ENCODE measurements at regions of chr17 and their contacts with region 1.

Region 1: DNA sequence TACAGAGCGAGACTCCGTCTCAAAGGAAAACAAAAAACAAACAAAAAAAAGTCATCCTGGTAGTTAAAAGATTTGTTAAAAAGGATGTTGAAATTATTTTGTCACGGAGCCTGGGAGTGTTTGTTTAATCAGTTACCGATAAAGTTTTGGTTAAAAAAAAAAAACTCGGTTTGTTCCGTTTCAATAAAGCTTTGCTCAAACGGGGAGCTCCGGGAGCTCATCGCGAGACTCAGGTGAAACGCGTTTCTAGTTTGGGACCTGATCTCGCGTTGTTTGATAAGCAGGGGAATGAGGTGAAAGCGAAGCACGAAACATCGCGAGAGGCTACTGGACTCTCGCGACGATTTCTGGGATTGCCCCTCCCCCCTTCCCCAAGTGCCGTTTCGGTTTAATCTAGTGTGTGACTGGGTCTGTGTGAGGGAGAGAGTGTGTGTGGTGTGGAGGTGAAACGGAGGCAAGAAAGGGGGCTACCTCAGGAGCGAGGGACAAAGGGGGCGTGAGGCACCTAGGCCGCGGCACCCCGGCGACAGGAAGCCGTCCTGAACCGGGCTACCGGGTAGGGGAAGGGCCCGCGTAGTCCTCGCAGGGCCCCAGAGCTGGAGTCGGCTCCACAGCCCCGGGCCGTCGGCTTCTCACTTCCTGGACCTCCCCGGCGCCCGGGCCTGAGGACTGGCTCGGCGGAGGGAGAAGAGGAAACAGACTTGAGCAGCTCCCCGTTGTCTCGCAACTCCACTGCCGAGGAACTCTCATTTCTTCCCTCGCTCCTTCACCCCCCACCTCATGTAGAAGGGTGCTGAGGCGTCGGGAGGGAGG is at the start of gene CDK12:
- DNase-seq: peak; percentile 94
- H3K4me3 Mint-ChIP-seq: peak within 1 kb of the TSS; percentile 95
- H3K27ac Mint-ChIP-seq: peak within 1 kb of the TSS; percentile 98
- H3K4me1 Mint-ChIP-seq: peaks cover 44% of the 10 kb centered on the region
- H3K27me3 Mint-ChIP-seq: no peaks in the 10 kb centered on the region
- total RNA-seq, gene CDK12: 97.4 and 99.5 TPM in 2 replicates

Region 2: GRCh38 chr17:39199820-39200069 is 261.6 kb before region 1 on chr17:
- intact Hi-C with region 1: loop called (anchors 5 kb)
- DNase-seq: peak; percentile 84
- H3K4me3 Mint-ChIP-seq: peak overlapping the region; percentile 93
- H3K27ac Mint-ChIP-seq: peak overlapping the region; percentile 98
- H3K4me1 Mint-ChIP-seq: peaks cover 47% of the 10 kb centered on the region
- H3K27me3 Mint-ChIP-seq: no peaks in the 10 kb centered on the region

Region 3: GRCh38 chr17:39401412-39402243 is 59.7 kb before region 1 on chr17 and contains the start of gene FBXL20:
- intact Hi-C with region 1: loop called (anchors 1 kb)
- DNase-seq: peak; percentile 84
- H3K4me3 Mint-ChIP-seq: peak within 1 kb of the TSS; percentile 94
- H3K27ac Mint-ChIP-seq: peak within 1 kb of the TSS; percentile 98
- H3K4me1 Mint-ChIP-seq: peaks cover 40% of the 10 kb centered on the region
- H3K27me3 Mint-ChIP-seq: no peaks in the 10 kb centered on the region
- total RNA-seq, gene FBXL20: 20.1 and 25.6 TPM in 2 replicates

Region 4: DNA sequence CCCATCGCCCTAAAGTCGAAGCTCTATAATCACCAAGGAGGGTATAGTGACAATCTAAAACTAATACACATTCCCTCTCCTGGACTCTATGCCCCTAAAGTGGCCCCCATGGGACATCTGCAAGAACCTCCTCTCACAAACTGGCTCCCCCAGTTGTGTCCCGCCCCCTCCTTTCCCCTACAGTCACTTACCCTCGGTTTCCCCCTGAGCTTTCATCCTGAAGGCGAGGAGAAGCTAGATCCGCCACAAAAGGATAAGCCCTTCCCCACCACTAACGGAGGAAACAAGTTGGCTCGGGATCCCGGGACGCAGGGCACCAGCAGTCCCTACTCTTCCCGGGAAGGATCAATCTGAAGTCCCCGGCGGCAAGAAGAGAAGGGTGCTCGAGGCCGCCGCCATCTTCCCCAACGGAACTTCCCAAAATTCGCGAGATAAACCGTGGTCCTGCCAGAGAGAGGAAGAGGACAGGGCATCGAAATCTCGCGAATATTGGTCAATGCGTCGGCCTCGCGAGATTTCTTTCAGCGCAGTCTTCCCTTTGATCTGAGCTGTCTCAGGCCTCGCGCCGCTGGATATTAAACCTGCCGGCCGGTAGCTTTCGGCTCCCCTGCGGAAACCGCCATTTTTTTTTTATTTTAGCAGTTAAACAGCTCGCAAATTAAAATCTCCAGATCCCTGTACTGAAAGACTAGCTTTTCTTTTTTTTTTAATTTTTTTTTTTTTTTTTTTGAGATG is 10.3 kb before region 1 on chr17 and contains the start of gene MED1:
- intact Hi-C with region 1: loop called (anchors 1 kb)
- DNase-seq: peak; percentile 92
- H3K4me3 Mint-ChIP-seq: peak within 1 kb of the TSS; percentile 99
- H3K27ac Mint-ChIP-seq: peak within 1 kb of the TSS; percentile 93
- H3K4me1 Mint-ChIP-seq: peaks cover 25% of the 10 kb centered on the region
- H3K27me3 Mint-ChIP-seq: no peaks in the 10 kb centered on the region
- total RNA-seq, gene MED1: 72.0 and 73.4 TPM in 2 replicates

Region 5: DNA sequence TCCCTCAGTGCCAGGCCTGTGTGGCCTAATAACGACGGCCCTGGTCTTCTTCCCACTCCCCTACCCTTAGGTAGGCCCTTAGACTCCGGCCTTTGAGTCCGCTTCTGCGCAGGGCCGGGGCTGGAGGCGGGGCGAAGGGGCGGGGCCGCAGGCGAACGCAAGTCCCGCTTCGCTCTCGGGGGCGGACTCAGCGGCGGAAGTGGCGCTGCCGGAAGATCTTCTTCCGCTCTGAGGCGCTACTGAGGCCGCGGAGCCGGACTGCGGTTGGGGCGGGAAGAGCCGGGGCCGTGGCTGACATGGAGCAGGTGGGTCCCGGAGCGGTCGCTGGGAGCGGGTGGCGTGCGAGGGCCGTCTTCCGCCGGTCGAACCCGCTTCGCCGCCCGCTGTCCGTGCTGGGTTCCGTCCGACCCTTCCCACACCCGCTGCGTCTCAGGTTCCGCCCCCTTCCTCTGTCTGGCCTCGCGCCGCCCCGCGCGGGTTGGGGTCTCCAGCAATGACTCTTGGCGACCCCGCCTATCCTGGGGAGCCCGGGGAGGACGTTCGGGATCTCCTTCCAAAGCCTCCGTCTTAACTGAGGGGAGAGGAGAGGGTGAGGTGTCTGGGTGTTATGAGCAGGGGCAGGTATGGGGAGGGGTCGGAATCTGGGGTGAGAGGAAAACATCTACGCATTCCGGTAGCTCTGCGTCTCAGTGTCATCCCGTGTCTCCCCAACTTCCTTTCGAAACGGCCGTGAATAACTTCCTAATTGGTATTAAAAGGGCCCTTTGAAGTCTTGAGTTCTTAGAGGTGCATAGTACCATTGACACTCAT is 175.8 kb after region 1 on chr17 and contains the start of gene STARD3:
- intact Hi-C with region 1: loop called (anchors 5 kb)
- DNase-seq: peak; percentile 88
- H3K4me3 Mint-ChIP-seq: peak within 1 kb of the TSS; percentile 94
- H3K27ac Mint-ChIP-seq: peak within 1 kb of the TSS; percentile 85
- H3K4me1 Mint-ChIP-seq: peaks cover 34% of the 10 kb centered on the region
- H3K27me3 Mint-ChIP-seq: peaks cover 2% of the 10 kb centered on the region
- total RNA-seq, gene STARD3: 54.7 and 65.3 TPM in 2 replicates

Region 6: GRCh38 chr17:39687811-39688518 is 226.6 kb after region 1 on chr17 and contains the start of gene PGAP3:
- intact Hi-C with region 1: loop called (anchors 2 kb)
- DNase-seq: peak; percentile 73
- H3K4me3 Mint-ChIP-seq: peak within 1 kb of the TSS; percentile 94
- H3K27ac Mint-ChIP-seq: peak within 1 kb of the TSS; percentile 69
- H3K4me1 Mint-ChIP-seq: peaks cover 22% of the 10 kb centered on the region
- H3K27me3 Mint-ChIP-seq: no peaks in the 10 kb centered on the region
- total RNA-seq, gene PGAP3: 14.4 and 16.9 TPM in 2 replicates

Region 7: GRCh38 chr17:40153603-40154236 is 692.4 kb after region 1 on chr17:
- intact Hi-C with region 1: loop called (anchors 1 kb)
- DNase-seq: no peak
- H3K4me3 Mint-ChIP-seq: no peak overlapping the region
- H3K27ac Mint-ChIP-seq: peak overlapping the region; percentile 98
- H3K4me1 Mint-ChIP-seq: peaks cover 51% of the 10 kb centered on the region
- H3K27me3 Mint-ChIP-seq: no peaks in the 10 kb centered on the region

Measured in activated T-helper 1 cell treated with anti-CD3 and anti-CD28 coated beads, Interleukin-12 subunit alpha, Interleukin-12 subunit beta, Interleukin-2, Interleukin-4 antibody, amounts not matched to agents 30 ng/mL and 10 ng/mL and 1 ng/mL, durations not matched to agents 14 hours and 24 hours and 36 hours (primary cell).